ENCODE measurements at regions of chr5 and their contacts with region 1.

Region 1: DNA sequence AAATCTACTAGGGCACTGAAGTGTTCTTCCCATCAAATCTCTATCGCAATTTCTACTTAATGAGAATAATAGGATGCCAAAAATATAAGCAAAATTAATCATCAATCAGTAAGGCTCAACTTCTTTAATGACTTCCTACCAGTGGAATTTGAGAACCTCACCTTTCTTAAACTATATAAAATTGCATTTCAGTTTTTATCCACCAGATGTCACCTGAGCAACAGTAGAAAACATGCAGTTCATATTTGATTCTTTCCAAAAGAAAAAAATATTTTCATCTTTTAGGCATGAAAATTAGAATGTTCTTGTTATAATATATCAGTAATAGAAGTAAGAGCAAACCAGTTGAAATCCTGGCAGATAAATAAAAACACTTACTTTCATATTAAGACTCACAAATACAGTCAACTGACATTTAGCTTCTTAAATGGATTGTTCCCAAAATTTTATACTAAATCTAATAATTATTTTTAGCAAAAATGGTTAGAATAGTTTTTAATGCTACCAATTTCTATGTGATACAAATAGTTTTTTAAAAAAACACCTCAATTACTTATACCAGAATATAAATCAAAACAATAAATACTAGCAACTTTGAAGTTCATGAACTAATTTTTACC is 13.4 kb upstream of the CCDC112 start:
- DNase-seq: no peak
- H3K4me3 ChIP-seq: no peak overlapping the region
- H3K27ac ChIP-seq: no peak overlapping the region
- H3K4me1 ChIP-seq: no peaks in the 10 kb centered on the region
- H3K27me3 ChIP-seq: no peaks in the 10 kb centered on the region
- CTCF ChIP-seq: peak; percentile 24 to 53 (median 48)
- EP300 ChIP-seq: no peak
- POLR2A ChIP-seq: no peak

Region 2: GRCh38 chr5:115284021-115284420 is 25.8 kb before region 1 on chr5:
- intact Hi-C with region 1: no loop called
- DNase-seq: no peak
- H3K4me3 ChIP-seq: no peak overlapping the region
- H3K27ac ChIP-seq: no peak overlapping the region
- H3K4me1 ChIP-seq: no peaks in the 10 kb centered on the region
- H3K27me3 ChIP-seq: no peaks in the 10 kb centered on the region
- CTCF ChIP-seq: no peak
- EP300 ChIP-seq: no peak
- POLR2A ChIP-seq: no peak

Region 3: DNA sequence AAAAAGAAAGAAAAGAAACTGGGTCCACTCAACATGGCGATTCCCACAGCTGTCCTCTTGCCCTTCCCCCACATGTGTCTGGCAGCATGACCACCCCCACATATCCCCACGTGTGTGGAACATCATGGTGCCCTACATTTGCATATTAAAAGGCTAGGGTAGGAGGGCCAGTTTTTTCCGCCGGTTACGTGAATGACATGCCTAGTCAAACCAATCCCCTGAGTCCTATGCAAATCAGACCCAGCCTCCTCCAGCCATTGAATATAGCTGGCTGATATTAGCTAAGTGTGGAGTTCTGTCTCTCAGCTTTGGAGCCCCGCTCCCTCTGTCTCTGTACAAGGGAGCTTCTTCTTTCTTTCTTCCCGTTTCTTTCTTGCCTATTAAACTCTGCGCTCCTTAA is 19.6 kb after region 1 on chr5:
- intact Hi-C with region 1: no loop called
- DNase-seq: no peak
- H3K4me3 ChIP-seq: no peak overlapping the region
- H3K27ac ChIP-seq: no peak overlapping the region
- H3K4me1 ChIP-seq: no peaks in the 10 kb centered on the region
- H3K27me3 ChIP-seq: no peaks in the 10 kb centered on the region
- CTCF ChIP-seq: no peak
- EP300 ChIP-seq: no peak
- POLR2A ChIP-seq: no peak

Region 4: DNA sequence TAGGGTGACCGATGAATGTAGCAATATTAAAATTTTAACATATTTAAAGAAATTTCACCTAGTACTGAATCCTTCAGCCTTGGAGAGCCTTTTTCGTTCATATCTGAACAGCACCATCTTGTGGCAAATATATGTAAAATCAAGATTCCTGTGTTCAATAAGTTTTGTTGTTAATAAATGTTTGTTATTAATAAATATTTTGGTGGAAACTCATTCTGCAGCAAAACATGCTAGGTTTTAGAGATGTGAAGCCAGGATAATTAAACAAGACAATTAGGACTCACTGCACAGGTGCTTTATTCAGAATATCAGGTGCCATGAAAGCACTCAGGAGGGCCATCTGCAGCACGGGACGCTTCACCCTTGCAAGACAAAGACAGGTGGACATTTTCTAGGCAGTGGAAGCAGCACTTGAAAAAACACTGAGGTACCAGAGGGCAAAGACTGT is 276.8 kb after region 1 on chr5:
- intact Hi-C with region 1: loop called (anchors 5 kb)
- DNase-seq: no peak
- H3K4me3 ChIP-seq: no peak overlapping the region
- H3K27ac ChIP-seq: no peak overlapping the region
- H3K4me1 ChIP-seq: no peaks in the 10 kb centered on the region
- H3K27me3 ChIP-seq: no peaks in the 10 kb centered on the region
- CTCF ChIP-seq: peak; percentile 34 to 49 (median 38)
- EP300 ChIP-seq: no peak
- POLR2A ChIP-seq: no peak